PC-3 (cell line): ENCODE measurements at regions of chr3 and their contacts with region 1.

Region 1: DNA sequence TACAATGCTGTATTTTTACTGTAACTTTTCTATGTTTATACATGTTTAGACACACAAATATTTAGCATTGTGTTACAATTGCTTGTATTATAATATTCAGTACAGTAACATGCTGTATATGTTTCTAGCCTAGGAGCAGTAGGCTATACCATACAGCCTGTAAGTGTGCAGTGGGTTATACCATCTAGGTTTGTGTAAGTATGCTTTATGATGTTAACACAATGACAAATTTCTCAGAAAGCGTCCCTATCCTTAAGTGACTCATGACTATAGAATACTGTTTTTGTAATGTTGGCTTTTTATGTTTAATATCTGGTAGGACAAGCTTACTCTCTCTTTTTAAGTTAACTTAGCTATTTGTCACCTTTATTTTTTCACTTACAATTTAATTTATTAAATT is 127.5 kb upstream of the THRB start:
- DNase-seq: peak; percentile 87
- ATAC-seq: peak; percentile 100
- H3K4me3 ChIP-seq: no peak overlapping the region
- H3K27ac ChIP-seq: no peak overlapping the region
- H3K4me1 ChIP-seq: peaks cover 21% of the 10 kb centered on the region
- H3K27me3 ChIP-seq: no peaks in the 10 kb centered on the region
- CTCF ChIP-seq: no peak

Region 2: DNA sequence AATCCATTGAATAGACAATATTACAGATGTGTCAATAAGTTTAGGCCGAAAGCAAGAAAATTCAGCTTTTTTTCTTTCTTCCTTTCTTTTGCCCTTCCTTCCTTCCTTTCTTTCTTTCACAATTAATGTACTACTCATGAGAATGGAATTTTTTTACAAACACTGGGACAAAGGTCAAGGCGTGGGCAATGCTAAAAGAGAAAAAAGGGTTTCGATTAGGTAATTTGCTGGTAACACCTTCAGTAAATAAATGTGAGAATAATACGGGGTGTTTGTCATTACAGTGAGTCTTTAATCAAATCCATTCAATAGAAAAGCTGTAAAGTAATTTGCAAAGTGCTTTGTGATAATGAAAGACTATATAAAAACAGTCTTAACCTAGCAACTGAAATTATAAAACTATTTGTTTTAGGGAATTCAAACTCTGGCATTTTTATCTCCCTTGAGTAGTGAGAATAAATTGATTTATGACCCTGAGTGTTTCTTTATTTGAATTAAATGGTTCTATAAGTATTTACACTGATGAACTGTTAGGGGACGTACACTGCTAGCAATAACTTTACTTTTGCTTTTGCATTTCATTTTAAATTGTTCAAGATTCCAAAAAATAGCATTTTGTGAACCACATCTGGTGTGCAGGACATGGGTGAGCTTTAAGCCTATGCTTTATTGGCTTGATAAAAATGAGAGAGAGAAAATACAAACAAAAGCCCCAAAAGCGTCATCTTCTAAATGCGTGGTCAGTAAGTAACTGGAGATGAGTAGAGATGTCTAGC is 23.3 kb before region 1 on chr3:
- CTCF ChIA-PET with region 1: no interaction called
- POLR2A ChIA-PET with region 1: no interaction called
- intact Hi-C with region 1: loop called (anchors 2 kb)
- DNase-seq: peak; percentile 88
- ATAC-seq: peak; percentile 45
- H3K4me3 ChIP-seq: peak overlapping the region; percentile 45
- H3K27ac ChIP-seq: peak overlapping the region; percentile 50
- H3K4me1 ChIP-seq: peaks cover 41% of the 10 kb centered on the region
- H3K27me3 ChIP-seq: no peaks in the 10 kb centered on the region
- CTCF ChIP-seq: no peak